HEK293 (cell line): ENCODE measurements at regions of chr1 and their contacts with region 1.

Region 1: DNA sequence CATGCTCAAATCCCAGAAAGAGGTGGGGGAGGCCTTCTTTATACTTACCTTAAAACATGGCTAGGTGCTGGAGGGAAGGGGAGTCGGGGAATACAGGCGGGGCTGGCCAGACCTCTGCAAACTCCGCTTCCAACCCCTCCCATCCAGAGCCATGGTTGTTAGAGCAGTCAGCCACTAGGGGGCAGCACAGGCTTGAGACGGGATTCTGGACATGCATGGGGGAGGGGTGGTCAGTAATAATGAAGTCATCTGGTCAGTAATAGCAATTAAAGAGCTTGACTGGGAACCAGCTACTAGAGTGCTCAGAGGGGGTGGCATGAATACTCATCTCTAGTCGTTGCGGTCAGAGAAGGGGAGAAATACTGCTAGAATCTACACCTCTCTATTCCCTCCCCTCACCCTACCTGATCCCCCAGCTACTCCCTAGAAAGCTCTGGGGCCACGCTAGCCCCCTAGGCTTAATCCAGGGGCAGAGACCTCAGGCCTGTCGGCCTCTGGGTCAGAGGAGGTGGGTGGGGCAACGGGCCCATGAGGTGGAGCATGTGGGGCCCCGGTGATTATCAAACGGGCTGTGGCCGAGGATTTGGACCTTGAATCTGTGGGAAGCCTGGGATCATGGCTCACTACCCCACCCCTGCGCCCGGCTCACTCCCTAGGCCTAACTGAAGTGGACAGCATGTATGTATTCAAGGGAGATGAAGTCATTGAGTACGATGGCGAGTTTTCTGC is 2.9 kb downstream of the CASQ1 start:
- H3K4me3 ChIP-seq: no peak overlapping the region
- H3K27ac ChIP-seq: no peak overlapping the region
- H3K4me1 ChIP-seq: no peaks in the 10 kb centered on the region
- CTCF ChIP-seq: peak; percentile 90

Region 2: DNA sequence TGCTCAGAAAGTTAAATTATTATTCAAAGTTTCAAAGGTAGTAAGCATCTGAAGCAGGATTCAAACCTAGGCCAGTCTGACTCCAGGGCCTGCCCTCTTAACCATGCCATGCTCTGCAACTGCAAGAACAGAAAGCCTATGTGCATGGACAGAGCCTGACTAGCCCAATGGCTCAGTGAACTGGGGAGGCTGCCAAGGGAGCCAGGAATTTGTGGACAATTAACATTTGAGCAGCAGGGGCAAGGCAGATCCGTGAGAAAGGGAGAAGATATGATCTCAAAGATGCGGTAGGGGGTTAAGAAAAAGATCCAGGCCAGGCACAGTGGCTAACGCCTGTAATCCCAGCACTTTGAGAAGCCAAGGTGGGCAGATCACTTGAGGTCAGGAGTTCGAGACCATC is 48.3 kb before region 1 on chr1:
- CTCF ChIA-PET with region 1: no interaction called
- POLR2A ChIA-PET with region 1: no interaction called
- H3K4me3 ChIP-seq: no peak overlapping the region
- H3K27ac ChIP-seq: no peak overlapping the region
- H3K4me1 ChIP-seq: no peaks in the 10 kb centered on the region
- CTCF ChIP-seq: no peak

Region 3: GRCh38 chr1:160161965-160162705 is 31.1 kb before region 1 on chr1:
- CTCF ChIA-PET with region 1: interaction called, 17 read pairs
- POLR2A ChIA-PET with region 1: no interaction called
- H3K4me3 ChIP-seq: no peak overlapping the region
- H3K27ac ChIP-seq: no peak overlapping the region
- H3K4me1 ChIP-seq: no peaks in the 10 kb centered on the region
- CTCF ChIP-seq: peak; percentile 56

Region 4: DNA sequence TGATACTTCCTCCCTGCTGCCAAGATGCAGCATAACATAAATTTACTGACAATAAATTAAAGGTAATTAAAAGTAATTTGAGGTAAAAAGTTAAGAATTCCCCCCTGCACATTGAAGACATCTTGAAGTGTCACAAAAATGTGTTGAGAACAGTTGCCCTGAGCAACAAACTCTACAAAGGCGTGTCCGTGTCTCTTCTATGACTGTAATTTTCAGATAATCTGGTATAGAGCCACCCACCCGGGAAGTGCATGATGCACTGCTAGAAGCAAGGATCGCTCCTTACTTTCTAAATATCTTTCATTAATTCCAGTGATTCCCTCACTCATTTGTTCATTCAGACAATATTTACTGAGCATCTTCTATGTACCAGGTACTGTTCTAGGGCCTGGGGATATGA is 13.9 kb before region 1 on chr1:
- CTCF ChIA-PET with region 1: interaction called, 13 read pairs
- POLR2A ChIA-PET with region 1: no interaction called
- H3K4me3 ChIP-seq: no peak overlapping the region
- H3K27ac ChIP-seq: no peak overlapping the region
- H3K4me1 ChIP-seq: no peaks in the 10 kb centered on the region
- CTCF ChIP-seq: no peak

Region 5: GRCh38 chr1:160205242-160206035 is 12.2 kb after region 1 on chr1 and contains the start of gene PEA15:
- CTCF ChIA-PET with region 1: interaction called, 64 read pairs
- POLR2A ChIA-PET with region 1: interaction called, 4 read pairs
- H3K4me3 ChIP-seq: peak within 1 kb of the TSS; percentile 70
- H3K27ac ChIP-seq: peak within 1 kb of the TSS; percentile 82
- H3K4me1 ChIP-seq: 0 out of 2 replicates have a peak, but pooled peaks cover 2% of the 10 kb centered on the region
- CTCF ChIP-seq: 0 out of 2 replicates have a peak, but pooled peaks have one; percentile 16

Region 6: GRCh38 chr1:160219062-160219929 is 26.0 kb after region 1 on chr1:
- CTCF ChIA-PET with region 1: interaction called, 86 read pairs
- POLR2A ChIA-PET with region 1: interaction called, 9 read pairs
- H3K4me3 ChIP-seq: no peak overlapping the region
- H3K27ac ChIP-seq: no peak overlapping the region; the same call in 1 of the 2 replicates
- H3K4me1 ChIP-seq: no peaks in the 10 kb centered on the region
- CTCF ChIP-seq: peak; percentile 69; the same call in 1 of the 2 replicates

Region 7: GRCh38 chr1:160232911-160233310 is 39.7 kb after region 1 on chr1:
- CTCF ChIA-PET with region 1: interaction called, 12 read pairs
- POLR2A ChIA-PET with region 1: no interaction called
- H3K4me3 ChIP-seq: no peak overlapping the region
- H3K27ac ChIP-seq: no peak overlapping the region
- H3K4me1 ChIP-seq: no peaks in the 10 kb centered on the region
- CTCF ChIP-seq: no peak

Region 8: GRCh38 chr1:160244209-160244608 is 51.0 kb after region 1 on chr1:
- CTCF ChIA-PET with region 1: interaction called, 88 read pairs
- POLR2A ChIA-PET with region 1: no interaction called
- H3K4me3 ChIP-seq: no peak overlapping the region
- H3K27ac ChIP-seq: no peak overlapping the region
- H3K4me1 ChIP-seq: peaks cover 19% of the 10 kb centered on the region
- CTCF ChIP-seq: no peak